ENCODE measurements at regions of chr1 and their contacts with region 1.

Region 1: GRCh38 chr1:109773146-109773899 is 9.6 kb upstream of the EPS8L3 start:
- DNase-seq: peak; percentile 83
- H3K4me3 Mint-ChIP-seq: no peak overlapping the region
- H3K27ac Mint-ChIP-seq: no peak overlapping the region
- H3K4me1 Mint-ChIP-seq: peaks cover 4% of the 10 kb centered on the region
- H3K27me3 Mint-ChIP-seq: no peaks in the 10 kb centered on the region

Region 2: GRCh38 chr1:109370712-109371455 is 402.4 kb before region 1 on chr1:
- CTCF ChIA-PET with region 1: no interaction called
- POLR2A ChIA-PET with region 1: no interaction called
- intact Hi-C with region 1: no loop called
- DNase-seq: no peak
- H3K4me3 Mint-ChIP-seq: no peak overlapping the region
- H3K27ac Mint-ChIP-seq: no peak overlapping the region
- H3K4me1 Mint-ChIP-seq: peaks cover 20% of the 10 kb centered on the region
- H3K27me3 Mint-ChIP-seq: peaks cover 22% of the 10 kb centered on the region

Region 3: DNA sequence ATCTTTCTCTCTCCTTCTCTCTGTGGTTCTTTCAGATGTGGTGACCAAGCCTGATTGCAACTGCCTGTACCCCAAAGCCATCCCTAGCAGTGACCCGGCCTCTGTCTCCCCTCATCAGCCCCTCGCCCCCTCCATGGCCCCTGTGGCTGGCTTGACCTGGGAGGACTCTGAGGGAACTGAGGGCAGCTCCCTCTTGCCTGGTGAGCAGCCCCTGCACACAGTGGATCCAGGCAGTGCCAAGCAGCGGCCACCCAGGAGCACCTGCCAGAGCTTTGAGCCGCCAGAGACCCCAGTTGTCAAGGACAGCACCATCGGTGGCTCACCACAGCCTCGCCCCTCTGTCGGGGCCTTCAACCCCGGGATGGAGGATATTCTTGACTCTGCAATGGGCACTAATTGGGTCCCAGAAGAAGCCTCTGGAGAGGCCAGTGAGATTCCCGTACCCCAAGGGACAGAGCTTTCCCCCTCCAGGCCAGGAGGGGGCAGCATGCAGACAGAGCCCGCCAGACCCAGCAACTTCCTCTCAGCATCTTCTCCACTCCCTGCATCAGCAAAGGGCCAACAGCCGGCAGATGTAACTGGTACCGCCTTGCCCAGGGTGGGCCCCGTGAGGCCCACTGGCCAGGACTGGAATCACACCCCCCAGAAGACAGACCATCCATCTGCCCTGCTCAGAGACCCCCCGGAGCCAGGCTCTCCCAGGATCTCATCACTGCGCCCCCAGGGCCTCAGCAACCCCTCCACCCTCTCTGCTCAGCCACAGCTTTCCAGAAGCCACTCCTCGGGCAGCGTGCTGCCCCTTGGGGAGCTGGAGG is 150.0 kb after region 1 on chr1:
- CTCF ChIA-PET with region 1: interaction called, 10 read pairs
- POLR2A ChIA-PET with region 1: interaction called, 4 read pairs
- intact Hi-C with region 1: no loop called
- DNase-seq: peak; percentile 39
- H3K4me3 Mint-ChIP-seq: no peak overlapping the region
- H3K27ac Mint-ChIP-seq: peak overlapping the region; percentile 50
- H3K4me1 Mint-ChIP-seq: no peaks in the 10 kb centered on the region
- H3K27me3 Mint-ChIP-seq: no peaks in the 10 kb centered on the region

Region 4: GRCh38 chr1:110011527-110012041 is 238.3 kb after region 1 on chr1:
- CTCF ChIA-PET with region 1: interaction called, 36 read pairs
- POLR2A ChIA-PET with region 1: no interaction called
- intact Hi-C with region 1: no loop called
- DNase-seq: peak; percentile 39
- H3K4me3 Mint-ChIP-seq: no peak overlapping the region
- H3K27ac Mint-ChIP-seq: no peak overlapping the region
- H3K4me1 Mint-ChIP-seq: no peaks in the 10 kb centered on the region
- H3K27me3 Mint-ChIP-seq: no peaks in the 10 kb centered on the region

Measured in activated CD4-positive, alpha-beta memory T cell treated with anti-CD3 and anti-CD28 coated beads for 36 hours (primary cell).